ENCODE measurements at regions of chr16 and their contacts with region 1.

Region 1: DNA sequence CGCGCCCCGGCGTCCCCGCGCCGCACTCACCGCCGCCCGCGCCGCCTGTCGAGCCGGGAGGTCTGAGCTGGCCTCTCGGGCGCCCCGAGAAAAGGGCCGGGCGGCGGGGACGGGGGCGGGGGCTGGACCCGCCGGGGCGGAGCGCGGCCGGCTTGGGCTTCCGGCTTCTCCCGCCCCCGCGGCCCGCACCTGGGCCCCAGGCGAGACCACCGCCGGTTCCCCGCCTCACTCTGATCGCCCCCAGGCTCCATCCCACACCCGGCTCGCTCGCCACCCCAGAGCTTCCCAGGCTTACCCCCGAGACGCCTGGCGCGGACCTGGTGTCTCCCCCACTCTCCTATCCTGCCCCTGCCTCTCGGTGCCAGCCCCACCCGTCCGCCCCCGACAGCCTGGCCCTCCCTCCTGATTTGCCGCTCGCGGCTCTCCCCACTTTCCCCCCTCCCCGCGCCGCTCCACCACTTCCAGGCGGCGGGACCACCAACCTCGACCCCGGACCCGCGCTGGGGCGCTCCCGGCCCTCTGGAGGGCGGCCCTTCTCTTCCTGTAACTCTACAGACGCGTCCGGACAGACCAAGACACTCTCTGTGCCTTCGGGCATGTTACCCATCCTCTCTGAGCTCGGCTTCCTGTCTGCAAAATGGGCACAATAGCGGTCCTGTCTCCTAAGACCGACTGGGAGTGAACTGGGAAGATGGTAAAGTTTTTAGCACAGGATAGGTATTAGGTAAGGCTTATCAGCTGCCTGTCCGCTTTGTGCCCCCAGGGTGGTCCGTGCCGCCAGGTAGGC is at the start of gene LITAF:
- DNase-seq: peak in 8 of 9 donors; percentile 52 to 75 (median 57)
- ATAC-seq: peak; percentile 71
- H3K4me3 ChIP-seq: peak within 1 kb of the TSS; percentile 88
- H3K4me3 Mint-ChIP-seq: peak within 1 kb of the TSS; percentile 91 to 100 (median 96)
- H3K27ac ChIP-seq: peak within 1 kb of the TSS; percentile 94
- H3K27ac Mint-ChIP-seq: peak within 1 kb of the TSS; percentile 90 to 99 (median 97)
- H3K4me1 ChIP-seq: peaks cover 32 to 38% of the 10 kb centered on the region in 2 donors
- H3K4me1 Mint-ChIP-seq: peaks cover 29 to 45% (median 37%) of the 10 kb centered on the region in 7 donors
- H3K27me3 ChIP-seq: no peaks in the 10 kb centered on the region
- H3K27me3 Mint-ChIP-seq: peaks cover 0 to 7% (median 0%) of the 10 kb centered on the region in 5 donors
- total RNA-seq, gene LITAF: 126 to 278 (median 208) TPM

Region 2: GRCh38 chr16:11297492-11298142 is 289.4 kb before region 1 on chr16:
- CTCF ChIA-PET with region 1: no interaction called
- POLR2A ChIA-PET with region 1: no interaction called
- intact Hi-C with region 1: no loop called
- DNase-seq: peak; percentile 50 to 70 (median 65)
- ATAC-seq: peak; percentile 95
- H3K4me3 ChIP-seq: peak overlapping the region; percentile 49
- H3K4me3 Mint-ChIP-seq: peak overlapping the region; percentile 76 to 87 (median 80)
- H3K27ac ChIP-seq: no peak overlapping the region
- H3K27ac Mint-ChIP-seq: peak overlapping the region; percentile 63 to 87 (median 77)
- H3K4me1 ChIP-seq: peaks cover 8% of the 10 kb centered on the region in 2 donors
- H3K4me1 Mint-ChIP-seq: peaks cover 9 to 53% (median 25%) of the 10 kb centered on the region in 7 donors
- H3K27me3 ChIP-seq: no peaks in the 10 kb centered on the region
- H3K27me3 Mint-ChIP-seq: peaks cover 0 to 19% (median 0%) of the 10 kb centered on the region in 5 donors

Region 3: DNA sequence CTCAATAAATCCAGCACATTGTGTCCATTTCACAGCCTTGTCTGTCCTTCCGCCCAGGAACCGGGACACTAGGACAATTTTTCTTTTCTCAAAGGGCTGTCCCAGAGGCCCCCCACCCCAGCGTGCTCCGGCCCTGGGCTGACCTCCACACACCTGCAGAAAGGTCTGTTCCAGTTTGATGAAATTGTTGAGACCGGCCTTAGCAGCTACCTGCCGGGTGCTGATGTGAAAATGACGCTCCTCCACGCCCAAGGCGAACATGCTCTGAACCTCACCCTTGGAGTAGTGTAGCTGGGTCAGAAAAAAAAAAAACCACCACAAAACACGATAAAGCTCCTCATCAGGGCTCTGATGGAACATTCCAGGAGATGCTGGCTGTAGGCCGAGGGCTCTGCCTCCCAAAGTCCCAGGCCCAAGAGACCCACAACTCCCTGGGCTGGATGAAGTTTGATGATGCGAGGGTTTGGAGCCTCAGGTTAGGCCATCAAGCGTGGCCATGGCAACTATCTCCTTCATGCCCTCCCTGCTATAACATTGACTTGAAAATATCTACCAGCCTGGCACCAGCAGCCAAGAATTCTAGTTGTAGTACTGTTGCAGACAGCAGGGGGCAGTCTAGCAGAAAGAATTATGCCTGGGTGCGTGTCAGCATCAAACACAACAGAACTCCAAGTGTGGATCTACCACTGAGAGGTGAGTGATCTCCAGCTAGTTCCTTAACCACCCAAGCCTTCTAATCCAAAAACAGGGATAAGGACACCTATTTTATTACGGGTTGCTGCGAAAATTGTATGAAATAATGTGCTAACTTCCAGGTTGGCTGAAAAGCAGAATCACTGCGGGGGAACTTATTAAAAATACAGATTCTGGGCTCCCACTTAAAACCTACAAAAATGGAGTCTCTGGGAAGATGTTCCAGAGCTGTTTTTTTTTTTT is 179.7 kb before region 1 on chr16:
- CTCF ChIA-PET with region 1: no interaction called
- POLR2A ChIA-PET with region 1: no interaction called
- intact Hi-C with region 1: loop called in 1 of 2 experiments (anchors 2 kb)
- DNase-seq: peak; percentile 44 to 78 (median 66)
- ATAC-seq: peak; percentile 85
- H3K4me3 ChIP-seq: no peak overlapping the region
- H3K4me3 Mint-ChIP-seq: no peak overlapping the region
- H3K27ac ChIP-seq: no peak overlapping the region
- H3K27ac Mint-ChIP-seq: peak overlapping the region in 2 of 9 donors; percentile 16 to 72
- H3K4me1 ChIP-seq: no peaks in the 10 kb centered on the region
- H3K4me1 Mint-ChIP-seq: peaks cover 0 to 5% (median 4%) of the 10 kb centered on the region in 7 donors
- H3K27me3 ChIP-seq: no peaks in the 10 kb centered on the region
- H3K27me3 Mint-ChIP-seq: no peaks in the 10 kb centered on the region

Region 4: DNA sequence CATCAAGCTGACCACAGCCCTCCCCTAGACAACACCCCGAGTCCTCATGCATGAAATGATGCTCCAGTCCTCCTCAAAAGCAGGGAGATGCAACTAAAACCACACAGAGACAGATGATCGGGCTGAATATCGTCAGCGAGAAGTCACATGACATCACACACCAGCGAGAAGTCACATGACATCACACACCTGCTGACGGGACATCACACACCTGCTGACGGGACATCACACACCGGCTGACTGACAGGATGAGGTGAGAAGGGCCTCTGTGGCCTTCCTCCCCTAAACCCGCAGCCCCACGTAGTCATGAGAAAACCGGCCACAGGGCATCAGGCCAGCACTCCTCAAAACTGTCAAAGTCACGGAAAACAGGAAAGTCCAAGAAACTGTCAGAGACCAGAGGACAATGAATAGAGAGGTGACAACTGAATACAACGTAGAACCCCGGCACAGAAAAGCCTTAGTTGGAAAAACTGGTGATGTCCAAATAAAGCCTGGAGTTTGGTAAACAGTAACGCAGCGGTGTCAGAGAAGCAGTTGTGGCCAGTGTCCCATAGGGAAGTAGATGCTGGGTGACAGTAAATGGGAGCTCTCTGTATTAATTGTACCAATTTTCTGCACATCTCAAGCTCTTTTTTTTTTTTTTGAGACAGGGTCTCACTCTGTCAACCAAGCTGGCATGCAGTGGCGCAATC is 14.6 kb before region 1 on chr16:
- CTCF ChIA-PET with region 1: interaction called, 3 read pairs
- POLR2A ChIA-PET with region 1: interaction called, 6 read pairs
- intact Hi-C with region 1: loop called in 1 of 2 experiments (anchors 1 kb)
- DNase-seq: peak in 8 of 9 donors; percentile 34 to 89 (median 84)
- ATAC-seq: peak; percentile 79
- H3K4me3 ChIP-seq: no peak overlapping the region
- H3K4me3 Mint-ChIP-seq: peak overlapping the region; percentile 43 to 81 (median 73)
- H3K27ac ChIP-seq: peak overlapping the region; percentile 72
- H3K27ac Mint-ChIP-seq: peak overlapping the region; percentile 71 to 100 (median 98)
- H3K4me1 ChIP-seq: peaks cover 47 to 70% of the 10 kb centered on the region in 2 donors
- H3K4me1 Mint-ChIP-seq: peaks cover 47 to 94% (median 69%) of the 10 kb centered on the region in 7 donors
- H3K27me3 ChIP-seq: no peaks in the 10 kb centered on the region
- H3K27me3 Mint-ChIP-seq: no peaks in the 10 kb centered on the region

Region 5: GRCh38 chr16:11597239-11598101 is 10.4 kb after region 1 on chr16:
- CTCF ChIA-PET with region 1: interaction called, 4 read pairs
- POLR2A ChIA-PET with region 1: interaction called, 23 read pairs
- intact Hi-C with region 1: no loop called
- DNase-seq: peak in 2 of 9 donors; percentile 24
- ATAC-seq: peak; percentile 85
- H3K4me3 ChIP-seq: no peak overlapping the region
- H3K4me3 Mint-ChIP-seq: peak overlapping the region in 4 of 10 donors; percentile 9 to 54 (median 14)
- H3K27ac ChIP-seq: peak overlapping the region; percentile 34
- H3K27ac Mint-ChIP-seq: peak overlapping the region; percentile 40 to 88 (median 81)
- H3K4me1 ChIP-seq: peaks cover 0 to 13% of the 10 kb centered on the region in 2 donors
- H3K4me1 Mint-ChIP-seq: peaks cover 8 to 26% (median 16%) of the 10 kb centered on the region in 7 donors
- H3K27me3 ChIP-seq: no peaks in the 10 kb centered on the region
- H3K27me3 Mint-ChIP-seq: peaks cover 0 to 5% (median 0%) of the 10 kb centered on the region in 5 donors

Region 6: DNA sequence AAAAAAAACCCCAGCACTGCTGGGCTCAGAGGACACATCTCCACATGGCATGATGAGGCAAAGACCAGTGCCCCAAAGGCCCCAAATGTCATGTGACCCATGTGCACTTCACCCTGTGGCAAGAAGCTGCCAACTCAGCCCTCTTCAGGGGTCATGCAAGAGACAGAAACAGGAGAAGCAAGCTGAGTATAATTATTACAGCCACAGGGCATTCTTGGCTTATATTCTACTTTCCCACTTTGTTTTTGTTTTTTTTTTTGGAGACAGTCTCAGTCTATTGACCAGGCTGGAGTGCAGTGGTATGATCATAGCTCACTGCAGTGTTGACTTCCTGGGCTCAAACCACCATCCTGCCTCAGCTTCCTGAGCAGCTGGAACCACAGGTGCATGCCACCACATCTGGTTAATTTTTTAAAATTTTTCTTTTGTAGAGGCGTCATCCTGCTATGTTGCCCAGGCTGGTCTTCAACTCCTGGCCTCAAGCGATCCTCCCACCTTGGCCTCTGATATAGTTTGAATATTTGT is 32.3 kb after region 1 on chr16:
- CTCF ChIA-PET with region 1: interaction called, 6 read pairs
- POLR2A ChIA-PET with region 1: interaction called, 92 read pairs
- intact Hi-C with region 1: loop called (anchors 1 to 2 kb)
- DNase-seq: peak in 5 of 9 donors; percentile 39 to 54 (median 52)
- ATAC-seq: peak; percentile 75
- H3K4me3 ChIP-seq: peak overlapping the region; percentile 47
- H3K4me3 Mint-ChIP-seq: peak overlapping the region; percentile 68 to 95 (median 76)
- H3K27ac ChIP-seq: peak overlapping the region; percentile 77
- H3K27ac Mint-ChIP-seq: peak overlapping the region; percentile 76 to 100 (median 98)
- H3K4me1 ChIP-seq: peaks cover 52 to 71% of the 10 kb centered on the region in 2 donors
- H3K4me1 Mint-ChIP-seq: peaks cover 52 to 92% (median 60%) of the 10 kb centered on the region in 7 donors
- H3K27me3 ChIP-seq: no peaks in the 10 kb centered on the region
- H3K27me3 Mint-ChIP-seq: no peaks in the 10 kb centered on the region

Region 7: GRCh38 chr16:11667824-11668622 is 81.0 kb after region 1 on chr16 and contains the start of gene SNN:
- CTCF ChIA-PET with region 1: no interaction called
- POLR2A ChIA-PET with region 1: interaction called, 7 read pairs
- intact Hi-C with region 1: loop called in 1 of 2 experiments (anchors 1 kb)
- DNase-seq: peak; percentile 76 to 91 (median 83)
- ATAC-seq: peak; percentile 89
- H3K4me3 ChIP-seq: peak within 1 kb of the TSS; percentile 77
- H3K4me3 Mint-ChIP-seq: peak within 1 kb of the TSS; percentile 88 to 96 (median 91)
- H3K27ac ChIP-seq: peak within 1 kb of the TSS; percentile 85
- H3K27ac Mint-ChIP-seq: peak within 1 kb of the TSS; percentile 85 to 98 (median 96)
- H3K4me1 ChIP-seq: peaks cover 36 to 80% of the 10 kb centered on the region in 2 donors
- H3K4me1 Mint-ChIP-seq: peaks cover 53 to 87% (median 71%) of the 10 kb centered on the region in 7 donors
- H3K27me3 ChIP-seq: no peaks in the 10 kb centered on the region
- H3K27me3 Mint-ChIP-seq: no peaks in the 10 kb centered on the region
- total RNA-seq, gene SNN: 17.0 to 86.8 (median 34.4) TPM

Measured in naive thymus-derived CD4-positive, alpha-beta T cell (primary cell).